ENCODE measurements at regions of chr2 and their contacts with region 1.

Region 1: DNA sequence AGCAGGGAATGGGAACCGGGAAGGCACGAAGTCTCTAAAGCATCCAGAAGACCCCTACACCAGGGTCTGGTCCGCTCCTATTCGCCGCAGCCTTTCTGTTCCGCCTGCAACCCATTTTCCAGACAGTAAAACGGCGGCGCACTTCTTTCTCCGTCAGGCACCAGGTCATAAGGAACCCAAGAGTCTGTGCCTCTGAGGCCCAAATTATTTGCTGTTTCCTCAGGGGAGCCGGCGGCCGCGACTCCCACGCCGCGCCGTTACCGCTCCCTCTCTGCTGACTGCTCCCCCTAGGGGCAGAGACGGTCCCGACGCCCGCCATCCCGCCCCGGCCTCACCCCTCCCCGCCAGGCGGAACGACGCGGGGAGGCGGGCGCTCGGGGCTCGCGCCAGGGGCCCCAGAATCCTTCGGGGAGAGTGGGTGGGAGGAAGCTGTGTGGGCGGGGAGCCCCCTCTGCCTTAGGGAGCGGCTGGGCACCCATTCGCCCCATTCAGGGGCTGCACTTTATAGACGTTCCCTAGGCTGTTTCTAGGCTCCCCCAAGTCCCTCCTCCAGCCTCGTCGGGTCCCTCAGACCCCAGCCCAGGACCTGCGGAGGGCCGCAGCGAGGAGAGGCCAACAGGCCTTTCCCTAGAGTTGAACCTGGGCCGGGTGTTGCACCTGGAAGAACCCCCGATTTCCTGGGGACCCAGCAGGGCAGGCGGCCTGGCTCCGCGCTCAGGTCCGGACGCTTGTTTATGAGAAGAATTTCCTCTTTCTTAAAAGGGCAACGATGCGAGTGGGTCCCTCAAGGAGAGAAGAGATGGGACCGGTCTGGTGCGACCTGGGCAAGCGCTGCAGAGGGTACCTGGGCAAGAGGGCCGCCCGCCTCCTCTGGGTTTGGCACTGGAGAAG is 3.6 kb upstream of the CTDSP1 start:
- DNase-seq: peak; percentile 92 to 97
- H3K4me3 ChIP-seq: peak overlapping the region; percentile 91 to 99
- H3K27ac ChIP-seq: peak overlapping the region; percentile 100
- H3K4me1 ChIP-seq: peaks cover 0 to 21% (median 11%) of the 10 kb centered on the region in 4 donors
- H3K27me3 ChIP-seq: no peaks in the 10 kb centered on the region
- CTCF ChIP-seq: peak; percentile 95

Region 2: GRCh38 chr2:218286570-218287459 is 109.2 kb before region 1 on chr2:
- intact Hi-C with region 1: loop called (anchors 5 kb)
- DNase-seq: peak; percentile 97 to 98
- H3K4me3 ChIP-seq: peak overlapping the region; percentile 53 to 56
- H3K27ac ChIP-seq: peak overlapping the region; percentile 99
- H3K4me1 ChIP-seq: peaks cover 9 to 92% (median 86%) of the 10 kb centered on the region in 4 donors
- H3K27me3 ChIP-seq: no peaks in the 10 kb centered on the region
- CTCF ChIP-seq: no peak

Region 3: GRCh38 chr2:218322895-218323808 is 72.9 kb before region 1 on chr2:
- intact Hi-C with region 1: no loop called
- DNase-seq: peak; percentile 50 to 78
- H3K4me3 ChIP-seq: peak overlapping the region; percentile 58 to 86
- H3K27ac ChIP-seq: peak overlapping the region; percentile 44 to 60
- H3K4me1 ChIP-seq: peaks cover 0 to 22% (median 20%) of the 10 kb centered on the region in 4 donors
- H3K27me3 ChIP-seq: no peaks in the 10 kb centered on the region
- CTCF ChIP-seq: no peak

Region 4: GRCh38 chr2:218452079-218452478 is 56.0 kb after region 1 on chr2:
- intact Hi-C with region 1: no loop called
- DNase-seq: no peak
- H3K4me3 ChIP-seq: no peak overlapping the region
- H3K27ac ChIP-seq: no peak overlapping the region
- H3K4me1 ChIP-seq: no peaks in the 10 kb centered on the region
- H3K27me3 ChIP-seq: no peaks in the 10 kb centered on the region
- CTCF ChIP-seq: no peak

Measured in tibial artery (tissue), 4 donors.